Prostate gland (tissue), 2 donors: ENCODE measurements at regions of chr10 and their contacts with region 1.

Region 1: GRCh38 chr10:15209827-15210509 is 41.5 kb upstream of the NMT2 start:
- DNase-seq: peak; percentile 85
- H3K4me3 ChIP-seq: no peak overlapping the region
- H3K27ac ChIP-seq: no peak overlapping the region
- H3K4me1 ChIP-seq: no peaks in the 10 kb centered on the region
- H3K27me3 ChIP-seq: no peaks in the 10 kb centered on the region
- CTCF ChIP-seq: peak; percentile 60 to 88 (median 78)
- POLR2A ChIP-seq: no peak

Region 2: GRCh38 chr10:15068802-15069201 is 141.2 kb before region 1 on chr10:
- intact Hi-C with region 1: no loop called
- DNase-seq: no peak
- H3K4me3 ChIP-seq: no peak overlapping the region
- H3K27ac ChIP-seq: no peak overlapping the region
- H3K4me1 ChIP-seq: no peaks in the 10 kb centered on the region
- H3K27me3 ChIP-seq: no peaks in the 10 kb centered on the region
- CTCF ChIP-seq: no peak
- POLR2A ChIP-seq: no peak

Region 3: DNA sequence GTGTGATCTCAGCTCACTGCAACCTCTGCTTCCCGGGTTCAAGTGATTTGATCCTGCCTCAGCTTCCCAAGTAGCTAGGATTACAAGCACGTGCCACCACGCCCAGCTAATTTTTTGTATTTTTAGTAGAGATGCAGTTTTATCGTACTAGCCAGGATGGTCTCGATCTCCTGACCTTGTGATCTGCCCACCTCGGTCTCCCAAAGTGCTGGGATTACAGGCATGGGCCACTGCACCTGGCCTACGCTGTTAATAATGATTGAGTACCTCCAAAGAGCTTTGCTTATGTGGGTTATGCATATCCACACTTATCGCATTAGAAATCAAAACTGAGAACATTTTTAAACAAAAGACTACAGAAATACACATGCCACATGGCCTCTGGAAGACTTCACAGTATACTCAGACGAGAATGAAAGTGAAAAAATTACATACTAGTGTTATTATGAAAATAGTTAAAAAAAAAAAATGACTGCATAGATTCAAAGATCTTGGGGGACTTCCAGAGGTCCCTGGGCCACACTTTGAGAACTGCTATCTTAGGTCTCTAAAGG is 87.4 kb before region 1 on chr10:
- intact Hi-C with region 1: no loop called
- DNase-seq: no peak
- H3K4me3 ChIP-seq: no peak overlapping the region
- H3K27ac ChIP-seq: peak overlapping the region in 1 of 2 donors; percentile 41
- H3K4me1 ChIP-seq: no peaks in the 10 kb centered on the region
- H3K27me3 ChIP-seq: no peaks in the 10 kb centered on the region
- CTCF ChIP-seq: no peak
- POLR2A ChIP-seq: no peak

Region 4: GRCh38 chr10:15370856-15371701 is 161.1 kb after region 1 on chr10 and contains the start of gene FAM171A1:
- intact Hi-C with region 1: loop called (anchors 1 kb)
- DNase-seq: peak; percentile 59
- H3K4me3 ChIP-seq: peak within 1 kb of the TSS; percentile 58 to 67
- H3K27ac ChIP-seq: peak within 1 kb of the TSS; percentile 61 to 62
- H3K4me1 ChIP-seq: no peaks in the 10 kb centered on the region
- H3K27me3 ChIP-seq: no peaks in the 10 kb centered on the region
- CTCF ChIP-seq: peak in 1 of 4 experiments; percentile 25
- POLR2A ChIP-seq: no peak
- total RNA-seq, gene FAM171A1: 16.3 to 24.2 TPM

Region 5: DNA sequence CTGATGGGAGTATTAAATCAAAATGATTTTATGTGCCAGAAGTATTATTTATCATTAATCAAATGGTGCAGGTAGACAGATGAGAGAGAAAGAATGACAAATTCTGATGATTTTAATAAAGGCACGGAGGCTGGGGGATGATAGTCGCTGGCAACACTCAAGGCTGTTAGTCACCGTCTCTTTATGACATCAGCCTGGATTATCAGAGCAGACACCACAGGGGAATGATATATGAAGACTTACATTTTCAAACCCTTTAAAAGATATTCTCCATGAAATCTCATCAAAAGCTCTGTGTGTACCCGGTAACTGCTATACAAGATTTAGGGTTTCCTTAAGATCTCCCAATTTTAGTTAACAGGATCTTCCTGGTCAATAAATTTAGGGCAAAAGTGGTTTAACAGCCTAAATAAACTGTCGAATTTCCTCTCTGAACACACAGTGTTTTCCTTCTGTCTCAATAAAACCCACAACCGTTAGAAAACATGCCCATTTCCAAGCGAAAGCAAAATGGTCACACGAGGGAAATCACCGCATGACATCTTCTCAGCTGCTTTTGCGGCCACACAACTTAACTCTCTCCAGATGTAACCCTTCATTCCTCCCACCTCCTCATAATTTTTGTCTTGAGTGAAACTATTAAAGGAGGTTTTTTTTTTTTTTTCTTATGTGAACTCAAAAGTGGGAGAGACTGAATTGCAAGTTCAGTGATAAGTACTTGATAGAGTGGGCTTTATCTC is 294.3 kb after region 1 on chr10:
- intact Hi-C with region 1: no loop called
- DNase-seq: no peak
- H3K4me3 ChIP-seq: no peak overlapping the region
- H3K27ac ChIP-seq: no peak overlapping the region
- H3K4me1 ChIP-seq: no peaks in the 10 kb centered on the region
- H3K27me3 ChIP-seq: no peaks in the 10 kb centered on the region
- CTCF ChIP-seq: no peak
- POLR2A ChIP-seq: no peak